ENCODE measurements at regions of chr1 and their contacts with region 1.

Region 1: GRCh38 chr1:84644472-84644871 is 45.8 kb downstream of the SSX2IP start:
- DNase-seq: no peak
- ATAC-seq: no peak
- H3K4me3 ChIP-seq: no peak overlapping the region
- H3K27ac ChIP-seq: no peak overlapping the region
- H3K4me1 ChIP-seq: peaks cover 0 to 4% (median 0%) of the 10 kb centered on the region in 12 donors
- H3K27me3 ChIP-seq: no peaks in the 10 kb centered on the region
- CTCF ChIP-seq: no peak
- POLR2A ChIP-seq: no peak

Region 2: DNA sequence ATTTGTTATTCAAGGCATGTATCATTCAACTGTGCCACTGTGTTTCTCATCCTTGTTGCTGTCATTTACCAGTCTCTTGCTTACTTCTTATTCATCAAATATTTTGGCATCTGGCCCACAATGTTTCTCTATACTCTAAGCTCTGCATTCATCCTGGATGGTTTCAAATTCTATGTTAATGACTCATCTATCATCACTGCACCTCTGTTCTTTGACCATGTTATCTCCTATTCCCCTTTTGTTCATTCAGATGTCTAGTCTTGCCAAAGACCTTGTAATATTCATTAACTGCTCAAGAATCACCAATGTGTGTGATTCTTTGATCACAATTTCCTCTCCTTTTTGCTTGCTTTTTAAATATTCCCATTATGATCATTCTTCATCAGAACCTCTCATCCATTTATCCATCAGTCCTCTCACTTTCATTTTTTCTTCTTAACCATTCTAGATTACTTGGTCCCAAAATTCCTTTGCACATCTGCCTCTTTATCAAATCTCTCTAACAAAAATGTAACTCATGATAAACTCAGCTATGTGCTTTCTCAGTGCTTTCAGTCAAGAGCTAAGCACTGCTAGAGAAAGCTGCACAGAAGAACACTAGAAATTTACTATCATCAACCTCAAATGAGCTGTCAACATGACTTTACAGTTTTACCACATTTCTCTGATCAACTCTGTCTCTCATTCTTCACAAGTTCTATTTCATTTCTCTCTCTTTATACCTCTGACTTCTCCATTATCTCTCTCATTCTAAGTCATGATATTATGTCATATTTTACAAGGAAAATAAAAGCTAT is 554.8 kb before region 1 on chr1:
- intact Hi-C with region 1: loop called in 1 of 10 experiments (anchors 5 kb)
- DNase-seq: no peak
- ATAC-seq: no peak
- H3K4me3 ChIP-seq: no peak overlapping the region
- H3K27ac ChIP-seq: no peak overlapping the region
- H3K4me1 ChIP-seq: peaks cover 0 to 13% (median 4%) of the 10 kb centered on the region in 12 donors
- H3K27me3 ChIP-seq: no peaks in the 10 kb centered on the region
- CTCF ChIP-seq: no peak
- POLR2A ChIP-seq: no peak

Region 3: GRCh38 chr1:84582802-84583587 is 61.5 kb before region 1 on chr1:
- intact Hi-C with region 1: loop called in 1 of 10 experiments (anchors 10 kb)
- DNase-seq: no peak
- ATAC-seq: peak in 2 of 4 donors; percentile 13 to 72
- H3K4me3 ChIP-seq: peak overlapping the region in 2 of 12 donors; percentile 16 to 28
- H3K27ac ChIP-seq: peak overlapping the region; percentile 7 to 73 (median 53)
- H3K4me1 ChIP-seq: peaks cover 0 to 18% (median 10%) of the 10 kb centered on the region in 12 donors
- H3K27me3 ChIP-seq: no peaks in the 10 kb centered on the region
- CTCF ChIP-seq: no peak
- POLR2A ChIP-seq: no peak